ENCODE measurements at regions of chr6 and their contacts with region 1.

Region 1: GRCh38 chr6:55981660-55982059 is 106.3 kb upstream of the BMP5 start:
- DNase-seq: no peak
- ATAC-seq: no peak
- H3K4me3 ChIP-seq: no peak overlapping the region
- H3K27ac ChIP-seq: no peak overlapping the region
- H3K4me1 ChIP-seq: no peaks in the 10 kb centered on the region
- H3K27me3 ChIP-seq: no peaks in the 10 kb centered on the region
- CTCF ChIP-seq: no peak
- EP300 ChIP-seq: no peak
- POLR2A ChIP-seq: no peak
- RAD21 ChIP-seq: no peak

Region 2: DNA sequence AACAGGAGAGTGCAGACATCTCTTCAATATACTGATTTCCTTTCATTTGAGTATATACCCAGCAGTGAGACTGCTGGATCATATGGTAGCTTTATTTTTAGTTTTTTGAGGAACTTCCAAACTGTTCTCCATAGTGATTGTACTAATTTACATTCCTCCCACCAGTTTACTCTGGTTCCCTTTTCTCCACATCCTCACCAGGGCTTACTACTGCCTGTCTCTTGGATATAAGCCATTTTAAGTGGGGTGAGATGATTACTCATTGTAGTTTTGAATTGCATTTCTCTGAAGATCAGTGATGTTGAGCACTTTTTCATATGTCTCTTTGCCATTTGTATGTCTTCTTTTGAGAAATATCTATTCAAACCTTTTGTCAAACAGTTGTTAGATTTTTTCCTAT is 337.8 kb before region 1 on chr6:
- CTCF ChIA-PET with region 1: no interaction called
- POLR2A ChIA-PET with region 1: no interaction called
- in situ Hi-C with region 1: no loop called
- intact Hi-C with region 1: no loop called
- DNase-seq: no peak
- ATAC-seq: no peak
- H3K4me3 ChIP-seq: no peak overlapping the region
- H3K27ac ChIP-seq: no peak overlapping the region
- H3K4me1 ChIP-seq: no peaks in the 10 kb centered on the region
- H3K27me3 ChIP-seq: no peaks in the 10 kb centered on the region
- CTCF ChIP-seq: no peak
- EP300 ChIP-seq: no peak
- POLR2A ChIP-seq: no peak
- RAD21 ChIP-seq: no peak

Region 3: GRCh38 chr6:55960344-55960743 is 21.3 kb before region 1 on chr6:
- CTCF ChIA-PET with region 1: no interaction called
- POLR2A ChIA-PET with region 1: no interaction called
- in situ Hi-C with region 1: no loop called
- intact Hi-C with region 1: loop called (anchors 1 kb)
- DNase-seq: no peak
- ATAC-seq: no peak
- H3K4me3 ChIP-seq: no peak overlapping the region
- H3K27ac ChIP-seq: no peak overlapping the region
- H3K4me1 ChIP-seq: no peaks in the 10 kb centered on the region
- H3K27me3 ChIP-seq: no peaks in the 10 kb centered on the region
- CTCF ChIP-seq: no peak
- EP300 ChIP-seq: no peak
- POLR2A ChIP-seq: no peak
- RAD21 ChIP-seq: no peak

Region 4: GRCh38 chr6:55997217-55997869 is 15.7 kb after region 1 on chr6:
- CTCF ChIA-PET with region 1: no interaction called
- POLR2A ChIA-PET with region 1: no interaction called
- in situ Hi-C with region 1: no loop called
- intact Hi-C with region 1: no loop called
- DNase-seq: no peak
- ATAC-seq: no peak
- H3K4me3 ChIP-seq: no peak overlapping the region
- H3K27ac ChIP-seq: no peak overlapping the region
- H3K4me1 ChIP-seq: no peaks in the 10 kb centered on the region
- H3K27me3 ChIP-seq: no peaks in the 10 kb centered on the region
- CTCF ChIP-seq: no peak
- EP300 ChIP-seq: no peak
- POLR2A ChIP-seq: no peak
- RAD21 ChIP-seq: no peak

Region 5: GRCh38 chr6:56437171-56437900 is 455.7 kb after region 1 on chr6:
- CTCF ChIA-PET with region 1: no interaction called
- POLR2A ChIA-PET with region 1: no interaction called
- in situ Hi-C with region 1: no loop called
- intact Hi-C with region 1: no loop called
- DNase-seq: no peak
- ATAC-seq: no peak
- H3K4me3 ChIP-seq: no peak overlapping the region
- H3K27ac ChIP-seq: no peak overlapping the region
- H3K4me1 ChIP-seq: peaks cover 0 to 4% of the 10 kb centered on the region in 2 experiments; a peak in 1 of 5 replicates
- H3K27me3 ChIP-seq: peaks cover 4 to 10% of the 10 kb centered on the region in 2 experiments; a peak in 4 of 5 replicates
- CTCF ChIP-seq: no peak
- EP300 ChIP-seq: no peak
- POLR2A ChIP-seq: no peak
- RAD21 ChIP-seq: no peak